ENCODE measurements at regions of chr6 and their contacts with region 1.

Region 1: GRCh38 chr6:63635588-63636517 is at the start of gene PHF3:
- H3K4me3 Mint-ChIP-seq: peak within 1 kb of the TSS; percentile 91
- H3K27ac Mint-ChIP-seq: peak within 1 kb of the TSS; percentile 98
- H3K4me1 Mint-ChIP-seq: peaks cover 44% of the 10 kb centered on the region
- H3K27me3 Mint-ChIP-seq: no peaks in the 10 kb centered on the region

Region 2: GRCh38 chr6:63573140-63573898 is 62.5 kb before region 1 on chr6:
- intact Hi-C with region 1: loop called (anchors 1 kb)
- H3K4me3 Mint-ChIP-seq: peak overlapping the region; percentile 93
- H3K27ac Mint-ChIP-seq: peak overlapping the region; percentile 97
- H3K4me1 Mint-ChIP-seq: peaks cover 5% of the 10 kb centered on the region
- H3K27me3 Mint-ChIP-seq: peaks cover 2% of the 10 kb centered on the region